CD8-positive, alpha-beta memory T cell (primary cell): ENCODE measurements at regions of chr9 and their contacts with region 1.

Region 1: DNA sequence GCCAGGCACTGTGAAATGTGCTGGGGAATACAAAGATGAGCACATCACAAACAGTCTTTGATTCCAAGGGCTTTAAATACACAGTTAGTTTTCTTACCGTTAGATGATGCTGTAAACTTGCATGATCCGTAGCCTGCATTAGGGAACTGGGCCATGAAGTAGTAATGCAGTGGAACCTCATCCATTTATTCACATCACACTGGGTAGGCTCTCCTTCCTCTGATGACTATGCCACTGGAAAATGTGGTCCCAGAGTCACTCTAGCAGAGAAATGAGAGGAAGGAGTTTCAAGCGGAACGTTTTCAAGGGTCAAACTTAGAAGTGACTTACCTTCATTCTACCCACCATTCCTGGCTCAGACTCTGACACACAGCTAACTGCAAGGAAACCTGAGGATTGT is 26.4 kb downstream of the ZFAND5 start:
- DNase-seq: no peak
- H3K4me3 ChIP-seq: no peak overlapping the region
- H3K4me3 Mint-ChIP-seq: no peak overlapping the region
- H3K27ac ChIP-seq: no peak overlapping the region
- H3K27ac Mint-ChIP-seq: no peak overlapping the region
- H3K4me1 ChIP-seq: no peaks in the 10 kb centered on the region
- H3K4me1 Mint-ChIP-seq: no peaks in the 10 kb centered on the region
- H3K27me3 ChIP-seq: no peaks in the 10 kb centered on the region
- H3K27me3 Mint-ChIP-seq: peaks cover 7 to 18% of the 10 kb centered on the region in 2 donors

Region 2: DNA sequence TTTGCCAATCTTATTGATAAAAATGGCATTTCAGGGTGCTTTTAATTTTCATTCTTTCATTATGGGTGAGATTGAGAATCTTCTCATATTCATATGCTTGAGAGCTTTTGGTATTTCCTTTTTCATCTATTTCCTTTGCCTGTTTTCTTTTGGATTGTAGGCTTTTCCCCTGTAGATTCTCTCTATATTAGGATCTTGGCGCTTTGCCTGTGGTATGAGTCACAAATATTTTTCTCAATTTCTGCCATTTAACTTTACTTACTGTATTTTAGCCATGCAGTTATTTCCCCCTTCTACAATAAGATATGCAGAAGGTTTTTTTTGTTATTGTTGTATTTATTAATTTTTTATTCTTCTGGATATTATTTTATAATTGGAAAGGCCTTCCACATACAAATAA is 1902.7 kb before region 1 on chr9:
- CTCF ChIA-PET with region 1: no interaction called
- POLR2A ChIA-PET with region 1: interaction called, 12 read pairs
- DNase-seq: no peak
- H3K4me3 ChIP-seq: no peak overlapping the region
- H3K4me3 Mint-ChIP-seq: no peak overlapping the region
- H3K27ac ChIP-seq: no peak overlapping the region
- H3K27ac Mint-ChIP-seq: no peak overlapping the region
- H3K4me1 ChIP-seq: peaks cover 3% of the 10 kb centered on the region
- H3K4me1 Mint-ChIP-seq: peaks cover 4 to 6% (median 5%) of the 10 kb centered on the region in 3 donors
- H3K27me3 ChIP-seq: no peaks in the 10 kb centered on the region
- H3K27me3 Mint-ChIP-seq: peaks cover 2 to 14% of the 10 kb centered on the region in 2 donors